ENCODE measurements at regions of chr3 and their contacts with region 1.

Region 1: DNA sequence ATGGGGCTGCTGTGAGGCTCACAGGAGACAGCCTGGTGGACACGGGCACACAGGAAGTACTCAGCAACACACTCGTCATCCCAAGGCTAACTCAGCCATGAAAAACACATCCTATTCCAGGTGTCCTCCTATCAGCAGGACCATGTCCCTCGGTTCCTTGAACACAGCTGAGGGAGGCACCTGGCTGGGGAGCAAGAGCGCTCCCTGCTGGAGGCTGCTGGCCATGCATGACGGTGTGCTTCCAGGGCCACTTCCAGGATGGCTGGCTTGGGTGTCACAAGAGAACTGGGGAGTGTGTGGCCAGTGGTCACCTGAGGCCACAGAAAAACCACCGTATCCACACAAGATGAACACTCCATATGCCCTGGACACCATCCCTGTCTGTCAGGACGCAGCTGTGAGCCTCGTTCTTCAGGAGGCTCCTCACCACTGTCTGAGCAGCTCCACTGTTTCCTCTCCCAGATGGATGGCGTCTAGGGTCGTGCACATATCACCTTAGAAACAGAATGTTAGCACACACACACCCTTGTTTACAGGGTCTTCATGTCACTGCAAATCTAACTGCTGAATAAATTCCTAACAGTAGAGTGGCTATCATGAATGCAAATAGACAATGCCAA is 31.0 kb downstream of the POC1A start:
- H3K4me3 ChIP-seq: no peak overlapping the region
- H3K27ac ChIP-seq: no peak overlapping the region
- H3K4me1 ChIP-seq: no peaks in the 10 kb centered on the region
- CTCF ChIP-seq: peak; percentile 86

Region 2: DNA sequence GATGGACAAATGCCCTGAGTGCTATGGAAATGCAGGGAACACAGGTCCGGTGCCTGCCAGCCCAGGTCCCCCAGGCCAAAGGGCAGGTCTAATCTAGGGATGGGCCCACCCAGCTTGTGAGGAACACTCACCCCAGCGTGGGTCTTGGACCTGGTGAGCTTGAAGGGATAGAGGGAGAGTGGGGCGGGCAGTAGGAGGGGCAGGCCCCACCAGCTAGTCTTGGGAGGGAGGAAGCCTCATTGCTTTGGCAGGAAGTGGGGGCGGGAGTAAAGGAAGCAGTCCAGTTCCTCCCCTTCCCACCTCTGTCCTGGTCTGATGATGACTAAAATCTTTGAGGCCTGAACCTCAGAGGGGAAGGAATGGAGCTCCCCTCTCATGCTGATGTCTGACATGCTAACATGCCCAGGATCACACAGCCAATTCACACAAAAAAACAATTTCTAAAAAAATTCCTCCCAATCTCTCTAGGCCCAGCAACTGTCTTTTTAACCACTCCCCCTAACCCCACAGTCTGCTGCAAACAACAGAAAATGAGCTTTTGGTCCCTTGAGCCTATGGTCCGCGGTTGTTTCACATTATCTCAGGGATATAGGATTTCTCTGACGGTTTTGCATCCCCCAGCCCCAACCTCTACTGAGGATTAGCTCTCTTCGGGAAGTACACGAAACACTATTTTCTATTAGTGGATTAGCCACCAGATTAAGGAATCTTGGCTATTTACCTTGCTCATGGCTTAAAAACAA is 36.1 kb before region 1 on chr3:
- CTCF ChIA-PET with region 1: interaction called, 13 read pairs
- POLR2A ChIA-PET with region 1: no interaction called
- H3K4me3 ChIP-seq: no peak overlapping the region
- H3K27ac ChIP-seq: no peak overlapping the region
- H3K4me1 ChIP-seq: no peaks in the 10 kb centered on the region
- CTCF ChIP-seq: no peak

Region 3: DNA sequence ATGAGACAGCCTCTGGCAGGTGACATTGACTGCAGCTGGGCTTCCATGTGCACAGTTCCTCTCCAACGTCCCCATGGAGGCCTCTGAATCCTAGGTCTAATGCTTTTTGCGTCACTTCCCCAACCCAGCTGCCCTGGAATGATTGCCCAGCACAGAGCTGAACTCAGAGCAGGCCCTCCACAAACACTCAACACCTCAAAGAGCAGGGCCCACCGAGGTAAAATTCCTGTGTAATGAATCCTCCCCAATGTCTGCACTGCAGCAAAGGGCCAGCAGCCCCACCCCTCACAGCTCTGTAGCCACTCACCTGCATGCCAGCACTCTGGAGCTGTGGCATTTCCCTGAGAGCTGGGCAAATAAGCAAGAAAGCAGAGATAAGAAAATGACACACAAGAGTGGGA is 24.2 kb before region 1 on chr3:
- CTCF ChIA-PET with region 1: interaction called, 11 read pairs
- POLR2A ChIA-PET with region 1: no interaction called
- H3K4me3 ChIP-seq: no peak overlapping the region
- H3K27ac ChIP-seq: no peak overlapping the region
- H3K4me1 ChIP-seq: no peaks in the 10 kb centered on the region
- CTCF ChIP-seq: no peak

Measured in HEK293 (cell line).